HEK293 (cell line): ENCODE measurements at regions of chrX and their contacts with region 1.

Region 1: DNA sequence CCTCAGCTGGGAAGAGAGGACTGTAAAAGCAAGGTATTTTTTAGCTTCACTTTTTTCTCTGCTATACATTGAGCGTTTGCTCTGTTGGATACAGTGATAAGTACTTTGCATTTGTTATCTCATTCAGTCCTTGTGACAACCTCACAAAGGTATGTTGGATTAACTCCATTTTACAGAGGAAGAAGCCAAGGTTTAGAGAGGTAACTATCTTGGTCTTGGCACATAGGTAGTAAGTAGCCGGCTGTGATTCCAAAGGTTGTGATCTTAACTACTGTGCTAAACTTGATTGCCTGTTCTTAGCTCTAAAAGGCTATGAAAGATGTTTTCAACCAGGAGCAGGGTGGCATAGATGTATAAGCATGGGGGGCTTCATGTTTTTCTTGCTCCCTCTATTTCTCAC is 134.4 kb downstream of the POLA1 start:
- H3K4me3 ChIP-seq: no peak overlapping the region
- H3K27ac ChIP-seq: no peak overlapping the region
- H3K4me1 ChIP-seq: no peaks in the 10 kb centered on the region
- CTCF ChIP-seq: no peak

Region 2: DNA sequence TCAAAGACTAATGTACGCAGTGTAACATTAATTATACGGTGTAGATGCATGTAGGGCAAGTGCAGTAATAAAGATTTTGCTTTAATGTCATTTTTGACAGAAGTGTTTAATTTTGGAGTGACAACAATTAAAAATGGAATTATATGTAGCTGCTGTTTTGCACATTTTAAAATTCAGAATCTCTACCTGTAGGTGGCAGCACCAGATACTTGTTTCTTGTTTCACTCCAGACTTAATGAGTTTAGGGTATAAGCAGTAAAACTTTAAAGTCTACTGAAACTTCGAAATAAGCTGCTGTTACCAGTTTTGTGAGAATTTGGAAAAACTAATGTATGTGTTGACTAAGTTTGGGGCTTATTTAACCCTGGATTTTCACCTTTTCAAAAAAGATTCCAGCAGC is 10.5 kb after region 1 on chrX:
- CTCF ChIA-PET with region 1: interaction called, 25 read pairs
- POLR2A ChIA-PET with region 1: no interaction called
- H3K4me3 ChIP-seq: no peak overlapping the region
- H3K27ac ChIP-seq: no peak overlapping the region
- H3K4me1 ChIP-seq: no peaks in the 10 kb centered on the region; the same call in 1 of the 2 replicates
- CTCF ChIP-seq: no peak

Region 3: DNA sequence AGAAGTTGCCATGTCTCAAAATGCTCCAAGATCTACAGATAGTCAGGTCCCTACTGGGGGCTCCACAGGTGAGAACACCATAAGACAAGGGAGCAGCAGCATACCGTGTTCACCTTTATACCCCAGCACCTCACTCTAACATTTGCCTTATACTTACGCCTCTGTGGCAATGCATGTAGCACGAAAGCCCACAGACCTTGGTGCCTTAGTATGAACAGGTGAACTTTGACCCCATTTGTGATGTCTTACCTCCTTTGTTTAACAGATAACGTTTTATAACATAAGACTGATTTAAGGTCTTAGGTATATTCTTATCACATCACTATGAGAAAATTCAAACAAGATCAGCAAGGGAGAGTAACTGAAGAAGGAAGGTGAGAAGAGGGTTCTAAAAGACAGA is 58.8 kb after region 1 on chrX:
- CTCF ChIA-PET with region 1: no interaction called
- POLR2A ChIA-PET with region 1: no interaction called
- H3K4me3 ChIP-seq: no peak overlapping the region
- H3K27ac ChIP-seq: no peak overlapping the region
- H3K4me1 ChIP-seq: no peaks in the 10 kb centered on the region
- CTCF ChIP-seq: no peak